MCF 10A (cell line): ENCODE measurements at regions of chr1 and their contacts with region 1.

Region 1: GRCh38 chr1:93304716-93305138 is 41.0 kb upstream of the DR1 start:
- DNase-seq: peak; percentile 80
- H3K4me3 Mint-ChIP-seq: no peak overlapping the region
- H3K27ac Mint-ChIP-seq: no peak overlapping the region
- H3K4me1 Mint-ChIP-seq: no peaks in the 10 kb centered on the region
- H3K27me3 Mint-ChIP-seq: no peaks in the 10 kb centered on the region
- CTCF ChIP-seq: peak; percentile 81

Region 2: DNA sequence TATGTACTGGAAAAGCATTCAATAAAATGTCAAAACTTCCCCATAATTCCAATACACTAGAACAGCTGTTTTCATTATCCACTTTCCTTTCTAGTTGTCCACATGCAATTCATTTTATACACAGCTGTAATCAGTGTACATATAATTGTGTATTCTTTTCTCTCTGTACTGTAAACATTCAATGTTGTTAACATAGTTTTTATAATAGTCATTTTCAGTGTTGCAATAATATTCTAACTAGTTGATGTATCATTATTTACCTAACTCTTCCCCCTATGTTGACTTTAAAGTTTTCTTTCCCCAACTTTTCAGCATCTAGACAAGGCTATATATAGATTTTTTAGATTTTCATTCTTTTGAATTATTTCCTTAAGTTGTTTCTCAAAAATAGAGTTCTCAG is 387.8 kb before region 1 on chr1:
- CTCF ChIA-PET with region 1: no interaction called
- POLR2A ChIA-PET with region 1: no interaction called
- intact Hi-C with region 1: no loop called
- DNase-seq: peak; percentile 16
- H3K4me3 Mint-ChIP-seq: no peak overlapping the region
- H3K27ac Mint-ChIP-seq: peak overlapping the region; percentile 26
- H3K4me1 Mint-ChIP-seq: peaks cover 5% of the 10 kb centered on the region
- H3K27me3 Mint-ChIP-seq: no peaks in the 10 kb centered on the region
- CTCF ChIP-seq: no peak

Region 3: GRCh38 chr1:93328809-93329760 is 24.4 kb after region 1 on chr1:
- CTCF ChIA-PET with region 1: interaction called, 24 read pairs
- POLR2A ChIA-PET with region 1: interaction called, 17 read pairs
- intact Hi-C with region 1: no loop called
- DNase-seq: no peak
- H3K4me3 Mint-ChIP-seq: no peak overlapping the region
- H3K27ac Mint-ChIP-seq: no peak overlapping the region
- H3K4me1 Mint-ChIP-seq: peaks cover 15% of the 10 kb centered on the region
- H3K27me3 Mint-ChIP-seq: no peaks in the 10 kb centered on the region
- CTCF ChIP-seq: no peak

Region 4: GRCh38 chr1:93345633-93346420 is 41.1 kb after region 1 on chr1 and contains the start of gene DR1:
- CTCF ChIA-PET with region 1: interaction called, 15 read pairs
- POLR2A ChIA-PET with region 1: interaction called, 36 read pairs
- intact Hi-C with region 1: loop called (anchors 1 kb)
- DNase-seq: peak; percentile 92
- H3K4me3 Mint-ChIP-seq: peak within 1 kb of the TSS; percentile 98
- H3K27ac Mint-ChIP-seq: peak within 1 kb of the TSS; percentile 98
- H3K4me1 Mint-ChIP-seq: peaks cover 5% of the 10 kb centered on the region
- H3K27me3 Mint-ChIP-seq: no peaks in the 10 kb centered on the region
- CTCF ChIP-seq: no peak
- total RNA-seq, gene DR1: 103 and 104 TPM in 2 replicates

Region 5: DNA sequence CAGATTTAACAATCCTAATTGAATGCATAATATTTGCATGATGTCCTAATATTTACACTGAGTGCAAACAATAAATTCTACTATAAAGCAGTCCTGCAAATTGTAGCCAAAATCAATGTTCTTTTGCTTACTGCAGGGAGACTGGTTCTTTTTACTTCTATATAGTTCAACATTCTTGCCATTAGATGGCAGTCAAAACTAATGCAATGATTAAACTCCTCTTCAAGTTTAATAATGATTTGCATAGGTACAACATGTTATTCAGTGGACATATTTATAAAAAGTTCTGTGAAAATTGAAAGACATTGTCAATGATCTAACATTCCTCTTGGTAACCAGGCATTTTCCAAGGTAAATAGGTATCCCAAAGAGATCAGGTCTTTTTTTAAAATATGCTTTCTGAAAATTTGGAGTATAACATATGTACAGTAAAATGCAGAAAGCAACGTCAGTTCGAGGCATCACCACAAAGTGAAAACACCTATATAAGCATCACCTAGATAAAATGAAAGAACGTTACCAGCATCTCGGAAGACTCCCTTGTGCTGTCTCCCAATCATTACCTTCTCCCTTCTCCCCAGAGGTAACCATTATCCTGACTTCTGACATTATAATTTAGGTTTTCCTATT is 133.4 kb after region 1 on chr1:
- CTCF ChIA-PET with region 1: interaction called, 15 read pairs
- POLR2A ChIA-PET with region 1: interaction called, 3 read pairs
- intact Hi-C with region 1: loop called (anchors 2 kb)
- DNase-seq: peak; percentile 55
- H3K4me3 Mint-ChIP-seq: no peak overlapping the region
- H3K27ac Mint-ChIP-seq: no peak overlapping the region
- H3K4me1 Mint-ChIP-seq: peaks cover 6% of the 10 kb centered on the region
- H3K27me3 Mint-ChIP-seq: no peaks in the 10 kb centered on the region
- CTCF ChIP-seq: peak; percentile 45

Region 6: DNA sequence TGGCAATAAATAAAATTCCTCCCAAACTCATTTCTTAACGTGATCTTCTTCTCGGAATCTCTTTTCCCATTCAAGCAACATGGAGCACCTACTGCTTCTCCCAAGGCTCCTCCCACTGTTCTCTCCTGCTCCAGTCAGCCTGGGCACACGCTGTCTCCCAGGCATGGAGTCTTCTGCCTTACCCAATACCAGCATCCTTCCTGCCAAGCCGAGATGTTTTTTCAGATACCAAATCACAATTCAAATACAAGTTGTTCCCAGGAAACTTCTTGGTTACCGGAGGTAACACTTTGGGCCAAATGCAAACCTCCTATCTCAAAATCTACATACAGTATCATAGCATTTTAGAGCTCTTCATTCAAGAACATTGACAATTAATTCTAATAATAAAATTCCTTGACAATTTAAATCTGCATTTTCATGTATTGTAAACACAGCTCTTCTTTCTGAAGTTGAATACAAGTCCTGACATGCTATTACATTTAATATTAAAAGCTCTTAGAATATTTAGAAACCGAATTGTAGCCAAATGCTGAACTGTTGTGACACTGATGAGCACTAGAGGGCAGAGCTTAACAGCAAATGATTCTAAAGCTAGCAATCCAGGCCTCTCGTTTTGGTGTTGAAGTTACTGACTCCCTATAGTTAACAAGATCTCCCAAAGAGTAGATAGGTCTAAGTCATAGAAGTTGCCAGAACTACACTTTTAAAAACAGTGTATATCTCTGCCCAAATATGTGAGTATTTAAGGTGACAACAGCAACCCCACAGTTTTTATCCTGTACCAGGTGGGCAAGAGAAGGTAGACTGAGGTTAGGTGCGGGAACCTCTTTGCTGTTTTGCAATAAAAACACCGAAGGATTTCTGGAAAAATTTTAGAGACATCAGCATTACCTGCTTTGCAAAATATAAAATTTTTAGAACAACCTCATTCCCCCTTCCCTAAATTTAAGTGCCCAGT is 324.7 kb after region 1 on chr1:
- CTCF ChIA-PET with region 1: interaction called, 6 read pairs
- POLR2A ChIA-PET with region 1: interaction called, 3 read pairs
- intact Hi-C with region 1: loop called (anchors 10 kb)
- DNase-seq: peak; percentile 76
- H3K4me3 Mint-ChIP-seq: peak overlapping the region; percentile 52
- H3K27ac Mint-ChIP-seq: peak overlapping the region; percentile 95
- H3K4me1 Mint-ChIP-seq: peaks cover 46% of the 10 kb centered on the region
- H3K27me3 Mint-ChIP-seq: no peaks in the 10 kb centered on the region
- CTCF ChIP-seq: peak; percentile 63